ENCODE measurements at regions of chr3 and their contacts with region 1.

Region 1: DNA sequence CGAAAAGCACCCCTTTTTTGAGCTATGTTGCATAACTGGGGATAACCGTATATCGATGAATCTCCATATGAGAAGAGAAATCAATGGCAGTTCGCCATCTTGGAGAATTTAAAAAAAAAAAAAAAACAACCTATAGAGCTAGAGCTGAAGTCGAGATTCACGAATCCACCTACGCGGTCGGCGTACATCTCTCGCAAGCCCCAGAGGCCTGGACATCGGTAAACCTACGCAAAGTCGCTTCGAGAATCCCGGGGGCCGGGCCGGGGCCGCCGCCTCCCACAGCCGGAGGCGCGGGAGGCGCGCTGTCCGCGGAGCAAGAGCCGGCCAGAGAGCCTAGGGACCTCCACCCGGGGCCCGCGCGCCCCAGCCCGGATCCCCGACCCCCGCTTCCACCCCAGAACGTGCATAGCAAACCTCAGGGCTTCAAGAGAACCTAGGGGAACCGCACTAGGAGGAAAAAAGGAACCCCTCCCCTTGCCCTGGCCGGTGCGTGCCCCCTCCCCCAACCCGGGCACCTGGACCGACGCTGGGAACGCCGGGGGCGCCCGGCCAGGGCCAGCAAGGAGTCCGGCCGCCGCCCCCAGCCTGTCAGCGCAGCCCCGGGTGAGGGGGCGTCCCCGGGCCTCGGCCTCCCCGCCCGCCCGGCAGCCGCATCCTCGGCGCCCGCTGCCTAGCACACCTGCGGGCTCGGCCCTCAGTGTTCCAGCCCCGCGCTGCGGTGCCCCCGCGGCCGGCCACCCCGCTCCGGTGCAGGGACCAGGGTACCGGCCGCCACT is 567 bp downstream of the PFN2 start:
- DNase-seq: peak; percentile 85
- H3K4me3 ChIP-seq: peak overlapping the region; percentile 92 to 94
- H3K27ac ChIP-seq: peak overlapping the region; percentile 91 to 94
- H3K4me1 ChIP-seq: peaks cover 4% of the 10 kb centered on the region
- H3K27me3 ChIP-seq: no peaks in the 10 kb centered on the region
- CTCF ChIP-seq: no peak
- POLR2A ChIP-seq: no peak

Region 2: DNA sequence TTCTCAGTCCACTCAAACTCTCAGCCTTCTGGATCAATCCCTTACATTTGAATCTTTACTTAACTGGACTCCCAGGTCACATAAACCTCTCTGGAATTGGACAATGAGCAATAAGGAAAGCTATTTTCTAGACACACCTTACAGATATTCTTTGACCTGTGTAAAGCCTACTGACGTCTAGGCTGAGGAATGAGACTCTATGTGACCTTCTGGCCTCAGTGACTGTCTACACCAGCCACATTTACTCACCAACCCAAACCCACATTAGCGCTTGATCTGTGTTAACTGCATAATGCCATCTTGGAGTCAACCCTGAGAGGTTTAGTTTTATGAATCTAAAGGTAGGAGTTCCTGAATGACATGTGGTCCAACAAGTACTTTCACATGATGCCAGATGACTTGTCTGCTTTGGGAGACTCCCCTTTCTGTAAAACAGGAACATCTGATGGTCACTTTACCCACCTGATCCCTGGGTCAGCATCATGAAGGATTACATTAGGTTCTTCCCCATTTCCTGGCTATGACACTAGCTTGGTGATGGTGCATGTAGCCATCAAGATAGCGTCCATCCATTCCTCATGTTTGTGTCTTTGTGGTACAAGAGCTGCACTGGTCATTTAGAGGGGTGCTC is 206.4 kb before region 1 on chr3:
- intact Hi-C with region 1: loop called (anchors 5 kb)
- DNase-seq: no peak
- H3K4me3 ChIP-seq: no peak overlapping the region
- H3K27ac ChIP-seq: no peak overlapping the region
- H3K4me1 ChIP-seq: no peaks in the 10 kb centered on the region
- H3K27me3 ChIP-seq: no peaks in the 10 kb centered on the region
- CTCF ChIP-seq: no peak
- POLR2A ChIP-seq: no peak

Region 3: GRCh38 chr3:149812606-149813366 is 157.3 kb before region 1 on chr3 and contains the start of gene RNF13:
- intact Hi-C with region 1: loop called (anchors 5 kb)
- DNase-seq: peak; percentile 98
- H3K4me3 ChIP-seq: peak within 1 kb of the TSS; percentile 62 to 82
- H3K27ac ChIP-seq: peak within 1 kb of the TSS; percentile 96 to 97
- H3K4me1 ChIP-seq: no peaks in the 10 kb centered on the region
- H3K27me3 ChIP-seq: no peaks in the 10 kb centered on the region
- CTCF ChIP-seq: no peak
- POLR2A ChIP-seq: peak; percentile 66
- total RNA-seq, gene RNF13: 77.3 to 105 TPM

Region 4: GRCh38 chr3:149898771-149899170 is 71.4 kb before region 1 on chr3:
- intact Hi-C with region 1: loop called (anchors 10 kb)
- DNase-seq: no peak
- H3K4me3 ChIP-seq: no peak overlapping the region
- H3K27ac ChIP-seq: no peak overlapping the region
- H3K4me1 ChIP-seq: no peaks in the 10 kb centered on the region
- H3K27me3 ChIP-seq: no peaks in the 10 kb centered on the region
- CTCF ChIP-seq: no peak
- POLR2A ChIP-seq: no peak

Region 5: DNA sequence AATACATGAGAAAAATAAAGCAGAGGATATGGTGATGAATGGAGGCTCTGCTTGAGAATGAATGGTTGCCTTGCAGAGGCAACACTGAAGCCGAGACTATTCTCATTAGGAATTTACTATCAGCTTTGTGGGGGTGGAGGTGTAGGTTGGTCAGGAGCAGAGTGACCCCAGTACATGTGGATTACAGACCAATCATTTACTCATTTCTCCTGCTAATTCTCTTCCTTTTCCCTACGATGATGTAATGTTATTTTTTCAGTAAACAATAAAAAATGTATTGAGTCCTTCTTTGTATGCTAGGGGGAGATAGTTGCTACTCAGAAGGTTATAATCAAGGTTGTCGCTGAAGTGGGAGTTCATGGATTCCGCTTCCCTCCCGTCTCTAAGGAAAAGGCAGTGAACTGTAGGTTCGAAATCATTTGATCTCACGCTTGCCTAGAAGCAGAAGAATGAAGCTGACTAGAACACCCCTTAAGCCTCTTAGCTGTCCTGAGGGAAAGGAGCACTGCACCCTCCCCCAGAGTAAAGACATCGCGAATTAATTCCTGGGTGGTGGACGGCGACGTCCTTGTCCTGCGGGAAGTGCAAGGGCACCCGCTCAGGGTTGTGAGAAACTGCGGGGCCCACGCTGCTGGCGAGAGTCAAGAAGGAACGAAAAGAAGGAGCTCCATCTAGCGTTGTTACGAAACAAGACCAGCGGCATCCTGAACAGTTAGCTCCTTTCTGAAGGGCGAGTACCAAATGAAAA is 213.7 kb after region 1 on chr3:
- intact Hi-C with region 1: loop called (anchors 1 kb)
- DNase-seq: peak; percentile 60
- H3K4me3 ChIP-seq: peak overlapping the region in 1 of 2 donors; percentile 20
- H3K27ac ChIP-seq: peak overlapping the region in 1 of 2 donors; percentile 18
- H3K4me1 ChIP-seq: no peaks in the 10 kb centered on the region
- H3K27me3 ChIP-seq: no peaks in the 10 kb centered on the region
- CTCF ChIP-seq: peak in 3 of 4 experiments; percentile 59 to 68 (median 64)
- POLR2A ChIP-seq: no peak

Region 6: GRCh38 chr3:150495563-150496168 is 525.5 kb after region 1 on chr3:
- intact Hi-C with region 1: loop called (anchors 10 kb)
- DNase-seq: no peak
- H3K4me3 ChIP-seq: no peak overlapping the region
- H3K27ac ChIP-seq: no peak overlapping the region
- H3K4me1 ChIP-seq: no peaks in the 10 kb centered on the region
- H3K27me3 ChIP-seq: no peaks in the 10 kb centered on the region
- CTCF ChIP-seq: peak; percentile 37 to 93 (median 88)
- POLR2A ChIP-seq: no peak

Measured in prostate gland (tissue), 2 donors.